ENCODE measurements at regions of chr1 and their contacts with region 1.

Region 1: DNA sequence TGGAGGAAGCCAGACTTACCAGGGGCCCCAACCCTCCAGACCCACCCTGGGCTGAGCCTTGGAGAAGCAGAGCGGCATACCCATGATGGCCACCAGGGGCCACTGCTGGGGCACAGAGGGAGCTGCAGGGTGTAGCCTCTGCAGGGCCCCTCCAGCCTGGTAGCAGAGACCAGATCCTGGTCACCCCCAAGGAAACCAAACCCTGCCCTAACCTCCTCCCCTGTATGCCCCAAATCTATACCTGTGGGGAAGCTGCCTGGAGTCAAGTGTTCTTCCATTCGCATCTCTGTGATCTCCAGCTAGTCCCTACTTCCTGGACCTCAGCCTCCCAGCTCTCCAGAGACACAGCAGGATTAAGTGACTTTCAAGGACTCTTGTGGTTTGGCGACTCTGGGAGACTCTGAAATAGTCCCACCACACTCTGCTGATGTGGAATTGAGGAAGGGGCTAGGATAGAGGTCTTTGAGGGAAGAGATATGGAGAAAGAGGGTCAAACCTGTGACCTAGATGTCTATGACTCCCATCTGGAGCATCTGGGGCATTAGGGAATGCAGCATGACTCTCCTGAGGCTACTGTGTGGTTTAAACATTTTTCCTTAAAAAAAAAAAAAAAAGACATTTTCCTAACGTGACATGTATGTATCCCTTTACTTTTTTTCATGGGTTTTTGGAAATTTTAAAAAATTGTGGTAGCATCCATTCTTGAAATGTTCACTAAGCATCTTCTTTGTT is 119.2 kb upstream of the IPO9 start:
- DNase-seq: no peak
- H3K4me3 ChIP-seq: no peak overlapping the region
- H3K27ac ChIP-seq: peak overlapping the region; percentile 95
- H3K4me1 ChIP-seq: peaks cover 55% of the 10 kb centered on the region
- H3K27me3 ChIP-seq: no peaks in the 10 kb centered on the region
- CTCF ChIP-seq: peak; percentile 93 to 96 (median 95)
- POLR2A ChIP-seq: no peak

Region 2: GRCh38 chr1:201538612-201539551 is 170.8 kb before region 1 on chr1 and contains the start of gene NAV1:
- intact Hi-C with region 1: loop called (anchors 5 kb)
- DNase-seq: no peak
- H3K4me3 ChIP-seq: peak within 1 kb of the TSS; percentile 56 to 64
- H3K27ac ChIP-seq: peak within 1 kb of the TSS; percentile 90
- H3K4me1 ChIP-seq: peaks cover 76% of the 10 kb centered on the region
- H3K27me3 ChIP-seq: no peaks in the 10 kb centered on the region
- CTCF ChIP-seq: no peak
- POLR2A ChIP-seq: peak; percentile 24 to 66
- total RNA-seq, gene NAV1: 45.9 TPM

Region 3: DNA sequence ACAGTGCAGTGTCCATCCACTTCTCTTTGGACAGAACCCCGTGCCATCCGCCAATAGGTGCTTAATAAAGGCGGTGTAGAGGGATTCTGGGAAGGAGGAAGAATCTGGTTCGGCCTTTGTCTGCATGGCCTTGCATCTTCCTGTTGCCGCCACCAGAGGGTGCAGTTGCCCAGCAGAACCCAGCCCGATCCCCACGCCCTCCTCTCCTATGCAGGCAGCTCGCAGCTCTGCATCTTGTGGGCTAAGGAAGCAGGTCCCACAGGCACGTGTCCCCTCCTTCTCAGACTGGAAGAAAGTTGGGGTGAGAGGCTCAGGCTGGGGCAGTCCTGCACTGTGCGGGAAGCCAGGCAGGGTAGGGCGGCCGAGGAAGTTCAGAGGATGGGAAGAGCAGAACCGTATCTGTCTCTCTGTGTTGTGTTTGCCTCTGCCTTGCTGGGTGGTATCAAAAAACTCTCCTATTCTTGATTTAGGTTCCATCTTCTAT is 150.0 kb before region 1 on chr1:
- intact Hi-C with region 1: loop called (anchors 1 kb)
- DNase-seq: no peak
- H3K4me3 ChIP-seq: no peak overlapping the region
- H3K27ac ChIP-seq: peak overlapping the region; percentile 6
- H3K4me1 ChIP-seq: peaks cover 54% of the 10 kb centered on the region
- H3K27me3 ChIP-seq: no peaks in the 10 kb centered on the region
- CTCF ChIP-seq: peak; percentile 97 to 98 (median 98)
- POLR2A ChIP-seq: no peak

Region 4: GRCh38 chr1:201792534-201793305 is 83.0 kb after region 1 on chr1:
- intact Hi-C with region 1: loop called (anchors 2 kb)
- DNase-seq: peak in 1 of 2 donors; percentile 93
- H3K4me3 ChIP-seq: no peak overlapping the region
- H3K27ac ChIP-seq: peak overlapping the region; percentile 81
- H3K4me1 ChIP-seq: peaks cover 42% of the 10 kb centered on the region
- H3K27me3 ChIP-seq: no peaks in the 10 kb centered on the region
- CTCF ChIP-seq: peak; percentile 97
- POLR2A ChIP-seq: no peak